PC-3 (cell line): ENCODE measurements at regions of chr3 and their contacts with region 1.

Region 1: DNA sequence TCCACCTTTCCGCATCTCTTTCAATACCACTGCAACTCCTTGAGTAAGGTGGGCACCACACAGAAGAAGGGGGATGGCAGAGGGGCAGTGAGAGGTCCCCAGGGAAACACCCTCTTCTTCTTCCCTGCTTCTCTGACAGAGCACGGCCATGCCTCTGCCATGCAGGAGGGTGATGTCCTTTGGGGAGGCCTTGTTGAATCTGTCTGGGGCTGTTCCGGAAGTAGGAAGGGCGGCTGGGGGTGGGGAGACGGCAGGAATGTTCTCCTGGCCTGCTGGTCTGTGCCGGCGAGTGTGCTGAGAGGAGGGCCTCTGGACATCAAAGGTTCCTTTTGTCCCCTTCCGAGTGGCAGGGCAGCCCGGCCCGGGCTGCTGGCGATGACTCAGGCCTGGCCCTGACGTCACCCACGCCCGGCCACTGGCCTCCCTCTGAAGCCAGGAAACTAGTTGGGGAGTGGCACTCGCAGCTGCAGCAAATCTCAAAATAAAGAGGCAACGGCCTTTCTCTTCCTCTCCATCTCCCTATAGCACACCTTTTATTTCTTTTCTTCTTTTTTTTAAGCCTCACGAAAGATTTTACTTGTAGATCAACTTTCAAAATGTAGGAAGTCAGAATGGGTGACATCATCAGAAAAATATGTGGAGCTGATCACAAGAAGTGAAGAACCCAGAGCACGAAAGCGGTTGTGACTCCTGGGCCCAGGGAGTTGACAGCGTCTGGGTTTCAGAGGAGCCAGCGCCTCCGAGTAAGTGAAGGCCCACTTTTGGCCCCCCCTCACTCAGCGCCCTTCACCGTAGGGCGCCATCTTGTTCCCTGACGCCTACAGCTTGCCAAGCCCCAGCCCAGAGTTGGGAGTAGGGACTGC is at the start of gene ZBTB38:
- DNase-seq: peak; percentile 89
- ATAC-seq: peak; percentile 69
- H3K4me3 ChIP-seq: peak within 1 kb of the TSS; percentile 56
- H3K27ac ChIP-seq: peak within 1 kb of the TSS; percentile 100
- H3K4me1 ChIP-seq: peaks cover 48% of the 10 kb centered on the region
- H3K27me3 ChIP-seq: no peaks in the 10 kb centered on the region
- CTCF ChIP-seq: no peak
- total RNA-seq, gene ZBTB38: 17.0 and 19.6 TPM in 2 replicates

Region 2: GRCh38 chr3:141402476-141403171 is 34.3 kb after region 1 on chr3:
- CTCF ChIA-PET with region 1: no interaction called
- POLR2A ChIA-PET with region 1: no interaction called
- intact Hi-C with region 1: loop called (anchors 2 kb)
- DNase-seq: peak; percentile 29
- ATAC-seq: peak; percentile 65
- H3K4me3 ChIP-seq: peak overlapping the region; percentile 69
- H3K27ac ChIP-seq: peak overlapping the region; percentile 58; the same call in 1 of the 2 replicates
- H3K4me1 ChIP-seq: peaks cover 27% of the 10 kb centered on the region
- H3K27me3 ChIP-seq: no peaks in the 10 kb centered on the region
- CTCF ChIP-seq: no peak

Region 3: GRCh38 chr3:141412936-141413354 is 44.7 kb after region 1 on chr3:
- CTCF ChIA-PET with region 1: no interaction called
- POLR2A ChIA-PET with region 1: no interaction called
- intact Hi-C with region 1: no loop called
- DNase-seq: no peak
- ATAC-seq: no peak
- H3K4me3 ChIP-seq: no peak overlapping the region
- H3K27ac ChIP-seq: peak overlapping the region; percentile 95
- H3K4me1 ChIP-seq: peaks cover 60% of the 10 kb centered on the region
- H3K27me3 ChIP-seq: no peaks in the 10 kb centered on the region
- CTCF ChIP-seq: no peak